Head of caudate nucleus (tissue), 42 donors: ENCODE measurements at regions of chr4 and their contacts with region 1.

Region 1: GRCh38 chr4:185039508-185040273 is 21.4 kb downstream of the HELT start:
- DNase-seq: peak in 36 of 42 donors; percentile 18 to 88 (median 60)

Region 2: DNA sequence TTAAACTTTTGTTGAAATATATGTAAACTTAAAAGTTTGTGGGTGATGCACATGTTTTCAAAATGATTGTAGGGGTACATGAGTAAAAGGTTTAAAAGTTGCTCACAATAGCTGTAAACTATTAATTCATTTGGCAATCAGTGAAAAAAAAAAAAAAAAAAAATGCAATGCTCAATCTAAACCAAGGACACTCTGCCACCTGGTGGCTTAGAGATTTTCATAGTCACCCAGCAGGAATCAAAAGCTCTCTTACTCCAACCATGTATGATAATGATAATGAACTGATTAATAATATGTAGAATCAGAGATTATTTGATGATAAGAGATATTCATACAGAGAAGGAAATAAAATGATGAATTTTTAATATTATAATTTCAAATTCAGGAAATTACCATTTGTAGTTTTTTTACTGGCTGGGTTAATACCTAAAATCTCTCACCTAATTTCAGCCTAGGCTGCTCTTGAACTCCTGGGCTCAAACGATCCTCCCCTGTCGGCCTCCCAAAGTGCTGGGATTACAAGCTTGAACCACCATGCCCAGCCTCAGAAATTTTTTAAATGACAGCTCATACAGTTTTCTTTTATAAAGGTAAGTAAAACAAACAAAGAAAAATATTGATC is 56.5 kb after region 1 on chr4:
- intact Hi-C with region 1: loop called (anchors 2 kb)
- DNase-seq: peak in 23 of 42 donors; percentile 11 to 81 (median 48)

Region 3: GRCh38 chr4:185412412-185412811 is 372.7 kb after region 1 on chr4:
- intact Hi-C with region 1: no loop called
- DNase-seq: no peak

Region 4: GRCh38 chr4:185479507-185479971 is 439.8 kb after region 1 on chr4:
- intact Hi-C with region 1: no loop called
- DNase-seq: no peak